WTC11 (cell line): ENCODE measurements at regions of chr20 and their contacts with region 1.

Region 1: GRCh38 chr20:45971675-45972499 is at the start of gene ZNF335:
- DNase-seq: peak; percentile 94
- ATAC-seq: peak; percentile 85
- H3K4me3 Mint-ChIP-seq: peak within 1 kb of the TSS; percentile 84
- H3K27ac Mint-ChIP-seq: peak within 1 kb of the TSS; percentile 98
- H3K4me1 Mint-ChIP-seq: peaks cover 14% of the 10 kb centered on the region
- H3K27me3 Mint-ChIP-seq: no peaks in the 10 kb centered on the region; the same call in 1 of the 2 replicates
- CTCF ChIP-seq: no peak
- total RNA-seq, gene ZNF335: 16.3 to 20.0 TPM (median 16.4 TPM) in 3 replicates

Region 2: GRCh38 chr20:45910670-45911485 is 61.0 kb before region 1 on chr20:
- CTCF ChIA-PET with region 1: interaction called, 12 read pairs
- POLR2A ChIA-PET with region 1: no interaction called
- DNase-seq: peak; percentile 100
- ATAC-seq: peak; percentile 91
- H3K4me3 Mint-ChIP-seq: peak overlapping the region; percentile 85
- H3K27ac Mint-ChIP-seq: peak overlapping the region; percentile 87; the same call in 1 of the 2 replicates
- H3K4me1 Mint-ChIP-seq: peaks cover 14% of the 10 kb centered on the region
- H3K27me3 Mint-ChIP-seq: no peaks in the 10 kb centered on the region
- CTCF ChIP-seq: no peak

Region 3: DNA sequence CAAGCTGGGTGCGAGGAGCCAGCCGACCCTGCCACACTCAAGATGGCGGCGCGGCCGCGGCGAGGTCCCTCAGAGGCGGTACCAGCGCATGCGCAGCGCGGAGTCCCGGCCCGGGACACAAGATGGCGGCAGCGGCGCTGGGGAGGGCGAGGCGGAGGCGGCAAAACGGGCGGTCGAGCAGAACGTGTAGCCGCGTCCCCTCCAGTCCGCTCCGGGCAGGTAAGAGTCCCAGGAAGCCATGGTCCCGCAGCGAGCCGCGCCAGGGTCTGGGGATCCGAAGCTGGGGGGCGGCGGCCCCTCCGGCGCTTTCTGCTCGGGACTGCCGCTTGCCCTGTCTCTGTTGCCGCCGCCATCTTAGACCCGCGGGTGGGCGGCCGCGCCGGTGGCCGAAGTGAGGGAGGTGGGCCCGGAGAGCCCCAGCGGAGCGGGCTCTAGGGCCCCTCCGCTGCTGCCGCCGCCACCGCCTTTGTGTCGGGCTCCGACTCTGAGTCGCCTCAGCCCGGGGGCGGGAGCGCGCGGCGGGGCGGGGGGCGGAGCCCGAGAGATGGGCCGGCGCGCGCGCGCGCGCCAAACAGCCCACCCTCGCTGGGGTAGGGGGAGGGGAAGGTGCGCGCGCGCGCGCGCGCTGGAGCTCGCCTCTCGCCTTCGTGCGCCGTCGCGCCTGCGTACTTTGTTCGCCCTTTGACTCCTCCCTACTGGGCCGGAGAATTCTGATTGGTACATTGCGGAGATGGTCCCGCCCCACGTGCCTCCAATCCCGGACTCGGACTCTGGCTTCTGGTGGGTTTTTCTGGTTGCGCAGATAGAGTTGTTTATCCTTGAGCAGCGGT is 37.1 kb before region 1 on chr20 and contains the start of gene PCIF1:
- CTCF ChIA-PET with region 1: interaction called, 48 read pairs
- POLR2A ChIA-PET with region 1: interaction called, 6 read pairs
- DNase-seq: peak; percentile 98
- ATAC-seq: peak; percentile 63
- H3K4me3 Mint-ChIP-seq: peak within 1 kb of the TSS; percentile 96
- H3K27ac Mint-ChIP-seq: peak within 1 kb of the TSS; percentile 100
- H3K4me1 Mint-ChIP-seq: peaks cover 39% of the 10 kb centered on the region
- H3K27me3 Mint-ChIP-seq: no peaks in the 10 kb centered on the region
- CTCF ChIP-seq: no peak
- total RNA-seq, gene PCIF1: 37.7 to 42.2 TPM (median 39.4 TPM) in 3 replicates

Region 4: DNA sequence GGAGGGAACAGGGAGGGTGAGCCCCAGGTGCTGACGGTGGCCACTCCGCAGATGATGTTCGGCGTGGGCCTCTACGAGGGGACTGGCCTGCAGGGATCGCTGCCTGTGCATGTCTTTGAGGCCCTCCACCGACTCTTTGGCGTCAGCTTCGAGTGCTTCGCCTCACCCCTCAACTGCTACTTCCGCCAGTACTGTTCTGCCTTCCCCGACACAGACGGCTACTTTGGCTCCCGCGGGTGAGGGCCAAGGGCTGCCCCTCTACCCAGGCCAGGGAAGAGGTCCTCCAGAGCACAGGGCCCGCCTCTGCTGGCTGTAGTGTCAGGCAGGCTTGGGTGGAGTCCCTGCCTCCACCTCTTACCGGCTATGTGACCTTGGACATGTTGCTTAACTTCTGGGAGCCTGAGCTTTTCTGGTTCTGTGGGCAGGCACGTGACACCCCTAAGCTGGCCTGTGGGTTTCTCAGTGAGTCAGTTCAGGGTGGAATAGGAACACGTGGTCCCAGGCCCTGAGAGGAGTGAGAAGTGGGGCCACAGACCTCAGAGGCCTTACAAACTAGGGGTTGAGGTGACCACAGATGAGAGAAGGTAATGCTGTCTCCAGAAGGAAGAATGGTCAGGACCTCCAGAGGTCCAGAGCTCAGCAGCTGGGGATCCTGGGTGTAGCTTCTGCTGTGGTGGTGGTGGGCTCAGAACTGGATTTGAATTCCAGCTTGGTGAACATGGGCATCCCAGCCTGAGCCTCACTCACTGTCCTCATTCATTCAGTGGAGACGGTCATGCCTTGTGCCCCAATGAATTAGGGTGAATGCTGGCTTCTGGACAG is 25.5 kb before region 1 on chr20:
- CTCF ChIA-PET with region 1: interaction called, 12 read pairs
- POLR2A ChIA-PET with region 1: interaction called, 3 read pairs
- DNase-seq: no peak
- ATAC-seq: no peak
- H3K4me3 Mint-ChIP-seq: no peak overlapping the region
- H3K27ac Mint-ChIP-seq: no peak overlapping the region
- H3K4me1 Mint-ChIP-seq: no peaks in the 10 kb centered on the region
- H3K27me3 Mint-ChIP-seq: no peaks in the 10 kb centered on the region
- CTCF ChIP-seq: no peak

Region 5: GRCh38 chr20:45987108-45987780 is 15.4 kb after region 1 on chr20:
- CTCF ChIA-PET with region 1: interaction called, 38 read pairs
- POLR2A ChIA-PET with region 1: no interaction called
- DNase-seq: peak; percentile 93
- ATAC-seq: peak; percentile 91
- H3K4me3 Mint-ChIP-seq: no peak overlapping the region
- H3K27ac Mint-ChIP-seq: no peak overlapping the region
- H3K4me1 Mint-ChIP-seq: peaks cover 14% of the 10 kb centered on the region
- H3K27me3 Mint-ChIP-seq: peaks cover 6% of the 10 kb centered on the region
- CTCF ChIP-seq: peak; percentile 93

Region 6: GRCh38 chr20:46022411-46023147 is 50.7 kb after region 1 on chr20:
- CTCF ChIA-PET with region 1: interaction called, 17 read pairs
- POLR2A ChIA-PET with region 1: no interaction called
- DNase-seq: peak; percentile 87
- ATAC-seq: peak; percentile 7; the same call in 1 of the 2 replicates
- H3K4me3 Mint-ChIP-seq: peak overlapping the region; percentile 76
- H3K27ac Mint-ChIP-seq: peak overlapping the region; percentile 28; the same call in 1 of the 2 replicates
- H3K4me1 Mint-ChIP-seq: peaks cover 7% of the 10 kb centered on the region
- H3K27me3 Mint-ChIP-seq: peaks cover 50% of the 10 kb centered on the region
- CTCF ChIP-seq: peak; percentile 79